Activated T-helper 2 cell treated with anti-CD3 and anti-CD28 coated beads, Interferon-gamma antibody, Interleukin-2, Interleukin-4, amounts not matched to agents 10 μg/mL and 5 μg/mL and 100 μg/mL, durations not matched to agents 14 hours and 24 hours and 36 hours (primary cell): ENCODE measurements at regions of chr5 and their contacts with region 1.

Region 1: DNA sequence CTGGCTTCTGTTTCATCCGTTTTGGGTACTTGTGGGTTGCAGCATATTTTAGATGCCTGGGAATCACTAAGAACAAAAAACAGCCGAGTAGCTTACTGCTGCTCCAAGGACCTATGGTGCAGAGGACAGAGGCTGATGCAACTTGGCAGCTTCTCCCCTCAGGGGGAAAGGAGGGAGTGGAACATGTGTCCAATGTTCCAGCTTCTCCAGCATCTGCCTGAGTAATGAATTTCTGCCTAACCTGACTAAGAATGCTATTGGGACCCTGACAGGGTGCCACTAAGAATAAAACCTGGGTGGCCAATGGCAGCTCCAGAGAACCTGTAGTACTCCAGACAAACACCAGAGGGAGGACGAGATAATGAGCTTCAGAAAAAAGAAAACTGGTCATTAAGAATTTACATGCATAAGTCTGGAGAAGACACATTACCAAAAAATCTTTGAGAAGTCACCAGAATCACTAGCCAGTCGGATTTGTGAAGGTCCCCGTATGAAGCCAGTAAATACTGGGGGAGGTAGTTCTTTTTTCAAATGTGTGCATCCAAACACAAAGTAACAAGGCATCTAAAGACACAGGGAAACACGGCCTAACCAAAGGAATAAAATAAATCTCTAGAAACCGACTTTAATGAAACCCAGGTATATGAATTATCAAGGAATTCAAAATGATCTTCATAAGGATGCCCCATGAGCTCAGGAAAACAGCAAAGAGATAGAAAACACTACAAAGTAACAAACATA is 293.5 kb downstream of the HINT1 start:
- DNase-seq: peak; percentile 13
- H3K4me3 Mint-ChIP-seq: no peak overlapping the region
- H3K27ac Mint-ChIP-seq: no peak overlapping the region
- H3K4me1 Mint-ChIP-seq: peaks cover 4% of the 10 kb centered on the region
- H3K27me3 Mint-ChIP-seq: no peaks in the 10 kb centered on the region

Region 2: DNA sequence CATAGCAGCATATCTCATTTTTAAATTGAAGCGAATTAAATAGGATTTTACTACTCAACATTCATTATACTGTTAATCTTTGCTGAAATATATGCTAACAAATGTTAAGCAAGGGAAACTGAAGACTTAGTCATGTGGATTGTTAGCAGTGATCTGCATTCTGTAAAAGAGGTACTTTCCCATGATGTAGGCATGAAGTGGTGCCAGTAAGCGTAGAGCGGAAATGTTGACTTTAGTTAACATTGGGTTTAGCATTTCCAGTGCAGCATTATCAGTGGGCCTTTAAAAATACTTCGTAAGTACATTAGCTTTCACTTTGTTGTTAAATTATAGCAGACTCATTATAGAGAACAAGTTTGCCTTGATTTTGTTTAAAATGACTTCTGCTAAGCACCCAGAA is 522.6 kb after region 1 on chr5:
- intact Hi-C with region 1: no loop called
- DNase-seq: peak; percentile 45
- H3K4me3 Mint-ChIP-seq: peak overlapping the region; percentile 63
- H3K27ac Mint-ChIP-seq: peak overlapping the region; percentile 94
- H3K4me1 Mint-ChIP-seq: peaks cover 67% of the 10 kb centered on the region
- H3K27me3 Mint-ChIP-seq: no peaks in the 10 kb centered on the region

Region 3: GRCh38 chr5:131417240-131417869 is 545.8 kb after region 1 on chr5:
- intact Hi-C with region 1: loop called (anchors 5 kb)
- DNase-seq: peak; percentile 66
- H3K4me3 Mint-ChIP-seq: peak overlapping the region; percentile 16
- H3K27ac Mint-ChIP-seq: peak overlapping the region; percentile 56
- H3K4me1 Mint-ChIP-seq: peaks cover 32% of the 10 kb centered on the region
- H3K27me3 Mint-ChIP-seq: no peaks in the 10 kb centered on the region